CD4-positive, alpha-beta memory T cell (primary cell): ENCODE measurements at regions of chr16 and their contacts with region 1.

Region 1: GRCh38 chr16:57051696-57052228 is 40.6 kb upstream of the CPNE2 start:
- DNase-seq: no peak
- H3K4me3 ChIP-seq: no peak overlapping the region
- H3K4me3 Mint-ChIP-seq: no peak overlapping the region
- H3K27ac ChIP-seq: no peak overlapping the region
- H3K27ac Mint-ChIP-seq: peak overlapping the region in 5 of 7 donors; percentile 24 to 79 (median 64)
- H3K4me1 ChIP-seq: peaks cover under 1% of the 10 kb centered on the region
- H3K4me1 Mint-ChIP-seq: peaks cover 3 to 19% (median 9%) of the 10 kb centered on the region in 4 donors
- H3K27me3 ChIP-seq: no peaks in the 10 kb centered on the region
- H3K27me3 Mint-ChIP-seq: no peaks in the 10 kb centered on the region

Region 2: DNA sequence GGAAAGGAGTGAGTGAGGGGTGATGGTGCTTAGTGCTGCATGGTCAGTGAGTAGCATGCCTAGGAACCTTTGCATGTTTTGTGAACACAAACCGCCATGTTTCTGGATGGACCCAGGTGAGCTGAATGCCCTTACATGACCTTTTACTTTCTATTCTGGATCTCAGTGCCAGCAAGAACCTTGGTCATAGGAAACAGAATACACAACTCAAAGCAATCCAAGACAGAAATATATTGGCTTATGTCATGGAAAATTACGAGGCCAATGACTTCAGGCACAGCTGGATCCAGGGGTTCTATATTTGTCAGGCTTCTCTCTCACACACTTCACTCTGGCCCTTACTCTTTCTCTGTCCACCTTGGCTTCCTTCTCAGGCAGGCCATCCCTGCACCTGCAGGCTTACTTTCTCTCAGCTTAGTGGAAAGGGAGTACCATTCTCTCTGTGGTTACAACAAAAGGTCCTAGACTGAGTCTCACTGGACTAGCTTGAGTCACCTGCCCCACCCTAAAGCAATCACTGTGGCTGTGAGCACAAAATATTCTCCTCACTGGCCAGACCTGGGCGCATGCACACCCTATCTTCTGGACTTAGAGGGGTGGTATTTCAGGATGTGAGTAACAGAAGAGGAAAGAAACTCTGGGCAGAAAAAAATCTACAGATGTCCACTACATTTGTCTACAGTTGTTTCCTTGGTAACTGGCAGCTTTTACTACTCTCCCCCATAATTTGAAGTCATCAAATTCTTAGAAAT is 20.2 kb after region 1 on chr16:
- CTCF ChIA-PET with region 1: no interaction called
- POLR2A ChIA-PET with region 1: interaction called, 3 read pairs
- intact Hi-C with region 1: loop called (anchors 2 kb)
- DNase-seq: no peak
- H3K4me3 ChIP-seq: no peak overlapping the region
- H3K4me3 Mint-ChIP-seq: peak overlapping the region in 1 of 8 donors; percentile 41
- H3K27ac ChIP-seq: no peak overlapping the region
- H3K27ac Mint-ChIP-seq: peak overlapping the region; percentile 48 to 84 (median 62)
- H3K4me1 ChIP-seq: peaks cover 4% of the 10 kb centered on the region
- H3K4me1 Mint-ChIP-seq: peaks cover 4 to 7% (median 6%) of the 10 kb centered on the region in 4 donors
- H3K27me3 ChIP-seq: no peaks in the 10 kb centered on the region
- H3K27me3 Mint-ChIP-seq: no peaks in the 10 kb centered on the region